ENCODE measurements at regions of chr3 and their contacts with region 1.

Region 1: GRCh38 chr3:159828542-159828943 is 160.1 kb upstream of the IL12A start:
- DNase-seq: no peak
- H3K4me3 ChIP-seq: no peak overlapping the region
- H3K27ac ChIP-seq: no peak overlapping the region
- H3K27me3 ChIP-seq: no peaks in the 10 kb centered on the region
- CTCF ChIP-seq: peak; percentile 56

Region 2: DNA sequence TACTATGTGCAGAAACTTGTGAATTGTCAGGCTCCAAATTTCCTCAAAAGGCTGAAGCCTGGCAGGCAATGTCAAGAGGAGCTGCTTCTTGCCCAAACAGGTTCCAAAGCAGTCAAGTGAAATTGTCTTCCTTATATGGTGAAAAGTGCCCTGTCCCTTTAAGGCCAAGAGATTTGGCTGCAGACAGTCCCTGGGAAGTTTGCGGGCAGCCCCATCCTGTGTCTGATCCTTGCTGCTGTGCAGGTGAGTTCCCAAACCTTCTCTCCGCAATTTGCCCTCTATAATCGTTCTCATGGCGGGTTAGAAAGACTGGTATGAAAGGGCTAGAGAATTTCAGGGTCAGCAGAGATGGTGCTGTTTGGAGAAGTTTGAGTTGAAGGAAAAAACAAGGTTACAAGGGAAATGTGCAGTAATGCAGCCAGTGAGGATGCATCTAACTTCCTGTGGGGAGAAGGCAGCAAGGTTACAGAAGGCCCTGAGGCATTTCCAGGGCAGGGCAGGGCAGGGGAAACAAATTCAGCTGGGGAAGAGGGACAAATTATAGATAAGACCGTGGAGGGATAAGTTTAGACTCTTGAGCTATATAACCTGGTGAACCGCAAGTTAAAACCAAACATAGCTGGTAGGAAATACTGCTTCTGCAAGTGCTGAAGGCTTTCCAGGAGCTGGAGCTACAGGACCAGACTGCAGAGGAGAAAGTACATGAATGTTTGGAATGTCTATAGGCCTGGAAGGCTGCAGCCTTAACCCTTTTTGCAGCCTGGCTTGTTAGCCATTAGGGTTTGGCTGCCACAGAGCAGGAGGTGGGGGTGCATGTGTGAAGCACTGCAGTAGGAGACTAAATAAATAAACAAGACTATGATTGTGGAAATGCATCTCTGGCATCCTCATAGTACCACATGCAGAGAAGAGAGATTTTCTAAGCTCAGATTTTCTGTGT is 96.1 kb before region 1 on chr3:
- CTCF ChIA-PET with region 1: interaction called, 14 read pairs
- POLR2A ChIA-PET with region 1: no interaction called
- DNase-seq: peak; percentile 52
- H3K4me3 ChIP-seq: peak overlapping the region; percentile 52
- H3K27ac ChIP-seq: peak overlapping the region; percentile 40
- H3K27me3 ChIP-seq: no peaks in the 10 kb centered on the region
- CTCF ChIP-seq: 0 out of 2 replicates have a peak, but pooled peaks have one; percentile 14

Region 3: DNA sequence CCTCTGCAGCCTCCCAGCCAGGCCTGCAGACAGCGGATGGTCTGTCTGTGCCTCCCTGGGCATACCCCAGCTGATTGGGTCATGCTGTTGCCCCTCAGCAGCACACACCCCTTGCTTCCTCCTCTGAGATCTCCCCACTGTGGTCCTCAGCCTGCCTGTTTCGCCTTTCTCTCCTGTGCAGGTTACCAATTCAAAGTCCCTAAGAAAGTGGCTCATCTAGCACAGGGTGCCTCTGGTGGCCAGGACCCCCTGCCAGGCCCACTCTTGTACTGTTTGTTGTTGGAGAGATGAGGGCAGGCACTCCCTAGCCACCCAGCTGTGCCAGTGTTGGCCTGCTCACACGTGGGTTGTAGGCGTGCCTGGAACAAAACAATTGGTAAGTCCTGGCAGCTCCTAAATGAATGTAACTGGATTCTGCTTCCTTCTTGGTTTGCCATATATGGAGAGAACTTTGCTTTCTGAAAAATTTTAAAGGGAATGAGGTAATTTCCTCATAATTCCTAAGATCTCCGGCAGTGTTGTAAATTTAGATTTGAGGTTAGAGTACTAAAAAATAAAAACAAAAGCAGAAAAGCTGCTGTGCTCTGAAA is 53.1 kb before region 1 on chr3:
- CTCF ChIA-PET with region 1: no interaction called
- POLR2A ChIA-PET with region 1: no interaction called
- DNase-seq: peak; percentile 71
- H3K4me3 ChIP-seq: no peak overlapping the region
- H3K27ac ChIP-seq: peak overlapping the region; percentile 85
- H3K27me3 ChIP-seq: no peaks in the 10 kb centered on the region
- CTCF ChIP-seq: no peak

Region 4: GRCh38 chr3:159813822-159814523 is 14.6 kb before region 1 on chr3:
- CTCF ChIA-PET with region 1: interaction called, 29 read pairs
- POLR2A ChIA-PET with region 1: no interaction called
- DNase-seq: no peak
- H3K4me3 ChIP-seq: no peak overlapping the region
- H3K27ac ChIP-seq: peak overlapping the region; percentile 22
- H3K27me3 ChIP-seq: no peaks in the 10 kb centered on the region
- CTCF ChIP-seq: no peak

Region 5: GRCh38 chr3:159861369-159861987 is 32.9 kb after region 1 on chr3:
- CTCF ChIA-PET with region 1: interaction called, 15 read pairs
- POLR2A ChIA-PET with region 1: no interaction called
- DNase-seq: no peak
- H3K4me3 ChIP-seq: no peak overlapping the region
- H3K27ac ChIP-seq: no peak overlapping the region
- H3K27me3 ChIP-seq: no peaks in the 10 kb centered on the region
- CTCF ChIP-seq: no peak

Region 6: GRCh38 chr3:159879598-159879997 is 51.1 kb after region 1 on chr3:
- CTCF ChIA-PET with region 1: interaction called, 78 read pairs
- POLR2A ChIA-PET with region 1: interaction called, 3 read pairs
- DNase-seq: no peak
- H3K4me3 ChIP-seq: no peak overlapping the region
- H3K27ac ChIP-seq: no peak overlapping the region
- H3K27me3 ChIP-seq: no peaks in the 10 kb centered on the region
- CTCF ChIP-seq: no peak

Region 7: DNA sequence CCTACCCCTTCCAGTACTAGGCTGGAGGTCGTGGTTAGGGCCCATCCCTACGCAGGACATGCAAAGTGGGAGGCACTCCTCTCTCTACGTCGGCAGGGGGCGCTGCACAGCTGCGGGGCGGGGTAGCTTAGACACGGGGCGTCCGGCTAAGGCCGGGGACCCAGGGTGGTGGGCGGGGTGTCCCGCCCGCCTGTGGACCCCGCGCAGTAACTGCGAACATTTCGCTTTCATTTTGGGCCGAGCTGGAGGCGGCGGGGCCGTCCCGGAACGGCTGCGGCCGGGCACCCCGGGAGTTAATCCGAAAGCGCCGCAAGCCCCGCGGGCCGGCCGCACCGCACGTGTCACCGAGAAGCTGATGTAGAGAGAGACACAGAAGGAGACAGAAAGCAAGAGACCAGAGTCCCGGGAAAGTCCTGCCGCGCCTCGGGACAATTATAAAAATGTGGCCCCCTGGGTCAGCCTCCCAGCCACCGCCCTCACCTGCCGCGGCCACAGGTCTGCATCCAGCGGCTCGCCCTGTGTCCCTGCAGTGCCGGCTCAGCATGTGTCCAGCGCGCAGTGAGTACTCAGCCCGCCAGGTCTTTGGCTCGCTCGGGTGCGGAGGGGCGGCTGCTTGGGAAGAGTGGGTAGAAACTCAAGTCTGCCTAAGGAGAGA is 160.2 kb after region 1 on chr3 and contains the start of gene IL12A:
- CTCF ChIA-PET with region 1: interaction called, 17 read pairs
- POLR2A ChIA-PET with region 1: no interaction called
- DNase-seq: no peak
- H3K4me3 ChIP-seq: peak within 1 kb of the TSS; percentile 70
- H3K27ac ChIP-seq: no peak within 1 kb of the TSS
- H3K27me3 ChIP-seq: no peaks in the 10 kb centered on the region
- CTCF ChIP-seq: peak; percentile 92
- polyA plus RNA-seq, gene IL12A: 2.3 and 3.6 TPM in 2 replicates